Esophagus muscularis mucosa (tissue), 4 donors: ENCODE measurements at regions of chr6 and their contacts with region 1.

Region 1: GRCh38 chr6:53484476-53485280 is 60.2 kb downstream of the GCLC start:
- DNase-seq: no peak
- H3K4me3 ChIP-seq: no peak overlapping the region
- H3K27ac ChIP-seq: peak overlapping the region in 2 of 4 donors; percentile 0 to 58
- H3K4me1 ChIP-seq: peaks cover 6 to 19% (median 17%) of the 10 kb centered on the region in 4 donors
- H3K27me3 ChIP-seq: no peaks in the 10 kb centered on the region
- CTCF ChIP-seq: peak in 2 of 3 experiments; percentile 97 to 98
- EP300 ChIP-seq: no peak
- POLR2A ChIP-seq: no peak

Region 2: GRCh38 chr6:53107091-53107490 is 377.6 kb before region 1 on chr6:
- intact Hi-C with region 1: loop called (anchors 5 kb)
- DNase-seq: peak; percentile 79
- H3K4me3 ChIP-seq: no peak overlapping the region
- H3K27ac ChIP-seq: peak overlapping the region in 3 of 4 donors; percentile 2 to 39 (median 12)
- H3K4me1 ChIP-seq: peaks cover 0 to 55% (median 44%) of the 10 kb centered on the region in 4 donors
- H3K27me3 ChIP-seq: no peaks in the 10 kb centered on the region
- CTCF ChIP-seq: no peak
- EP300 ChIP-seq: no peak
- POLR2A ChIP-seq: no peak

Region 3: DNA sequence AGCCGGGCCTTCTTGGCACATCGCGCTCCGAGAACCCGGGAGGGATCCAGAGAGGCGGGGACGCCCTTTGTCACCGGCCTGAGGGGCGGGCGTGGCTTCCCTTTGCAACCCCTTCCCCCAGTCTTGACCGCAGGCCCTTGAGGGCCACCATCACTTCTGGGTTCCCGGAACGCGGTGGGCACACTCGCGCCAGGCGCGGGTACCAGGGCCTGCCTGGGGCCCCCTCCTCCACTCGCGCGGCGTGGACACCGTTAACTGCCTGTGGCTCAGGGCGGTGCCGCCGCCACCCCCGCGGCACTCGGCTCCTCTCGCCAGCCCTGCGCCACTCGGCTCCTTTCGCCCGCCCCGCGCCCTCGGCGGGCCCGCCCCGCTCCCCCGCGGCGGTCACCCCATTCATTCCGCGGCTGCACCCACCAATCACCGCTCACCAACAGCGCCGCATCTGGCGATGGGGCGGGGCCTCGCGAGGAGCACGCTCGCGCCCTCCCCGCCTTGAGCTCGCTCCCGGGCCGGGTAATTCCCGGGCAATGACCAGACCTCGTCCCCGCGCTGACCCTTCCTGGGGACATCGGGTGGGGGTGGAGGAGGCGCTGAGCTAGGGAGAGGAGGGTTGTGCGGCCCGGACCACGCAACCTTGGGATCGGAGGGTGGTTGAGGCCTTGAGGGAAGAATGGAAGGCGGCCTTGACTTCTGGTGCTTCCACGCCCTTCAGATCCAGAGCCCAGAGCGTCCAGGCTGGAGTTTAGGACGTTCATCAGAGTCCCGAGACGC is 125.4 kb before region 1 on chr6:
- intact Hi-C with region 1: loop called (anchors 10 kb)
- DNase-seq: peak; percentile 98
- H3K4me3 ChIP-seq: peak overlapping the region; percentile 65 to 78 (median 68)
- H3K27ac ChIP-seq: peak overlapping the region; percentile 92 to 95 (median 93)
- H3K4me1 ChIP-seq: peaks cover 11 to 19% (median 17%) of the 10 kb centered on the region in 4 donors
- H3K27me3 ChIP-seq: no peaks in the 10 kb centered on the region
- CTCF ChIP-seq: no peak
- EP300 ChIP-seq: no peak
- POLR2A ChIP-seq: peak; percentile 64